ENCODE measurements at regions of chr5 and their contacts with region 1.

Region 1: DNA sequence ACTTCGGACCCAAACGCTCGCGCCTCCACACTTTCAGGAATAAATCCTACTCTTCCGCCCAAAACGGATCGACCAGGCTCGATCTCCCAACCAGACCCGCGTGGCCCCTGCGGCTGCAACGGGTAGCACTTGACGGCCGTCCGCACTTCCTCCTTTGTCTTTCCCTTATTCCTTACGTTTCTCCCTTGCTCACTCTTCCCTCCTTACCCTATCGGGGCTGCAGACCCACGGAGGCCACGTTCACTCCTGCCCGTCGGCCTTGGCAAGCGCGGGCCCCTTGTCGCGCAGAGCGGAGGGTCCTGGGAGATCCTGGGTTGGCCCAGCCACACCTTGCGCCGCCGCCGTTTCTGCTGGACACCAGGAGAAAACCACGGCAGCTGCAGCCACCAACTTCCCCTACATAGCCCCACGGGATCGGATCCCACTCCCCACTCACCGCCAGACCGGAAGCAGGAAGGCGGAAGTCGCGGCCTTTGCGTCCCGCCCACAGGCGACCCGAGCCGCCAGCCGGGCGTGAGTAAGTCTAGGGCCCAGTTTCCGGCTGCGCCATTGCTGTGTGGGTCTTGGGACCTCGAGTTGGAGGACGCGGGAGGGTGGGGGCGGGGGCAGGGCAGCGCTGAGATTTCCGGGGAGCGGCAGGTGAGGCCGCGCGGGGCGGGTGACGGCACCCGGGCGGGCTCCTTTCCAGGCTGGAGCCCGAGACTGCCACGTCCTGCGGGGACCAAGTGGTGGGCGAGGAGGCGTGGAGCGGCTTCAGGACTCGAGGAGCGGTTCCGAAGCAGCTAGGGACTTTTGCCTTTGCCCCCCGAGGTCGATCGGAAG is at the start of gene SMIM15:
- DNase-seq: peak; percentile 54
- ATAC-seq: peak; percentile 94
- H3K4me3 ChIP-seq: peak within 1 kb of the TSS; percentile 73
- H3K27ac ChIP-seq: peak within 1 kb of the TSS; percentile 98
- H3K4me1 ChIP-seq: no peaks in the 10 kb centered on the region; the same call in 1 of the 2 replicates
- H3K27me3 ChIP-seq: no peaks in the 10 kb centered on the region
- CTCF ChIP-seq: no peak
- EP300 ChIP-seq: no peak
- POLR2A ChIP-seq: peak; percentile 99
- RAD21 ChIP-seq: no peak
- polyA plus RNA-seq, gene SMIM15: 13.8 to 18.7 TPM

Region 2: DNA sequence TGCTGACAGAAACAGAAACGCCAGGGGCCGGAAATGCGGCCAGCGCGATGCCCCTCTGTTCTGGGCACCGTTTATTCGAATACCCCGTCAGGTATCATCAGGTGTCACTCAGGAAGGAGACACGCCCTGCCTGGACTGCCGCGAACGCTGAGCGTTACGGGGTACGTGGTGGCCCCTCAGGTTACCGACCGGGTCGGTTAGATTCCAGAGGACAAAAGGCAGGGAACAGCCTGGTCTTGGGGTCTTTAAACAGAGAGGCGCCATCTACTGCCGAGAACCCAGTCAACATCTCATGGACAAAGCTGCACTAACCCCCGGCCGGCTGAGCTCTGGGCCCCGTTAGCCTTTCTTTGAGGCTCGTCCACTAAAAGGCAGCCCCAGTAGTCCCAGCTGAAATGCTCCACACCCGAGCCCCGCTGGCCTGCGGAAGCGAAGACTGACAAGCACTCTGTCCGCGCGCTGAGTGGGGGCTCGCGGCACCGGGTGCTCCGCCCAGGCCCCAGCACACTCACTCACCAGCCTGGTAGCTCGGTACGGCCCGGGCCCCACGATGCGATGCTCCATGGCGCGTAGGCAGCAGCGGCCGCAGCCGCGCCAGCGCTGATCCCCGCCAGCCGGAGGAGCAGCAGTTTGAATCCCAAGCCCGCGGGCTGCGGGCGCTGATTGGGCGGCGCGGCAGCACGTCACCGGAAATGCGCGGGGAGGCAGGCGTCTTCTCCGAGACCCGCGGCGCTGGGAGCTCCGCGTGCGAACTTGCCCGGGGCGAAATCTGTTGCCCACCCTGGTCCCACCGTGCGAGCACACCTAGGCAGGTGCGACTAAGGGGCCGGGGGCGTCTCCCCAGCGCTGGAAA is 462.5 kb before region 1 on chr5 and contains the start of gene DEPDC1B:
- CTCF ChIA-PET with region 1: no interaction called
- POLR2A ChIA-PET with region 1: no interaction called
- RAD21 ChIA-PET with region 1: no interaction called
- SMC1A ChIA-PET with region 1: no interaction called
- in situ Hi-C with region 1: no loop called
- intact Hi-C with region 1: loop called (anchors 10 kb)
- DNase-seq: peak; percentile 50
- ATAC-seq: peak; percentile 95
- H3K4me3 ChIP-seq: peak within 1 kb of the TSS; percentile 94
- H3K27ac ChIP-seq: peak within 1 kb of the TSS; percentile 89
- H3K4me1 ChIP-seq: no peaks in the 10 kb centered on the region
- H3K27me3 ChIP-seq: no peaks in the 10 kb centered on the region
- CTCF ChIP-seq: peak; percentile 28 to 37 (median 33); a peak in 5 of 6 replicates
- EP300 ChIP-seq: no peak
- POLR2A ChIP-seq: peak; percentile 93
- RAD21 ChIP-seq: no peak
- polyA plus RNA-seq, gene DEPDC1B: 29.7 to 30.1 TPM

Region 3: GRCh38 chr5:61089351-61089750 is 72.9 kb before region 1 on chr5:
- CTCF ChIA-PET with region 1: no interaction called
- POLR2A ChIA-PET with region 1: no interaction called
- RAD21 ChIA-PET with region 1: no interaction called
- SMC1A ChIA-PET with region 1: no interaction called
- in situ Hi-C with region 1: no loop called
- intact Hi-C with region 1: no loop called
- DNase-seq: no peak
- ATAC-seq: no peak
- H3K4me3 ChIP-seq: no peak overlapping the region
- H3K27ac ChIP-seq: no peak overlapping the region
- H3K4me1 ChIP-seq: no peaks in the 10 kb centered on the region
- H3K27me3 ChIP-seq: no peaks in the 10 kb centered on the region
- CTCF ChIP-seq: no peak
- EP300 ChIP-seq: no peak
- POLR2A ChIP-seq: no peak
- RAD21 ChIP-seq: no peak

Region 4: DNA sequence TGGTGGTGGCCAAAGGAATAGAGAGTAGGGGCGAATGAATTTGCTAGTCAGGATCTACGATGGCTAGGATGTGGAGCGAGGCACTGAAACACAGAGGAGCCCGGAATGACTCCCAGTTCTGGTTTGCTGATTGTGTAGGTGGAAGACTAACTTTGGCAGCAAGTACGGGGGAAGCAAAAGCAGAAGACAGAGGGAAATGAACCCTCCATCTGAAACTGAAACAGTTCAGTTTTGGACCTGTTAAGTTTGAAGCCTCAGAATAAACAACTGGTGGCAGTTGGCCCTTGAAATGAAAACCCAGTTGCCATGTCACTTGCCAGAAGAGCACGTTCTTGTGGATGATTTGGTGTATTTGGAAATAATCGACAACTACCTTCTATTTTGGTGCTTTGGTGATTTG is 15.5 kb after region 1 on chr5:
- CTCF ChIA-PET with region 1: interaction called, 3 read pairs
- POLR2A ChIA-PET with region 1: interaction called, 11 read pairs
- RAD21 ChIA-PET with region 1: no interaction called
- SMC1A ChIA-PET with region 1: interaction called, 10 read pairs
- in situ Hi-C with region 1: no loop called
- intact Hi-C with region 1: no loop called
- DNase-seq: no peak
- ATAC-seq: peak; percentile 91
- H3K4me3 ChIP-seq: no peak overlapping the region
- H3K27ac ChIP-seq: no peak overlapping the region
- H3K4me1 ChIP-seq: peaks cover 10% of the 10 kb centered on the region
- H3K27me3 ChIP-seq: no peaks in the 10 kb centered on the region
- CTCF ChIP-seq: no peak
- EP300 ChIP-seq: no peak
- POLR2A ChIP-seq: no peak
- RAD21 ChIP-seq: no peak

Region 5: DNA sequence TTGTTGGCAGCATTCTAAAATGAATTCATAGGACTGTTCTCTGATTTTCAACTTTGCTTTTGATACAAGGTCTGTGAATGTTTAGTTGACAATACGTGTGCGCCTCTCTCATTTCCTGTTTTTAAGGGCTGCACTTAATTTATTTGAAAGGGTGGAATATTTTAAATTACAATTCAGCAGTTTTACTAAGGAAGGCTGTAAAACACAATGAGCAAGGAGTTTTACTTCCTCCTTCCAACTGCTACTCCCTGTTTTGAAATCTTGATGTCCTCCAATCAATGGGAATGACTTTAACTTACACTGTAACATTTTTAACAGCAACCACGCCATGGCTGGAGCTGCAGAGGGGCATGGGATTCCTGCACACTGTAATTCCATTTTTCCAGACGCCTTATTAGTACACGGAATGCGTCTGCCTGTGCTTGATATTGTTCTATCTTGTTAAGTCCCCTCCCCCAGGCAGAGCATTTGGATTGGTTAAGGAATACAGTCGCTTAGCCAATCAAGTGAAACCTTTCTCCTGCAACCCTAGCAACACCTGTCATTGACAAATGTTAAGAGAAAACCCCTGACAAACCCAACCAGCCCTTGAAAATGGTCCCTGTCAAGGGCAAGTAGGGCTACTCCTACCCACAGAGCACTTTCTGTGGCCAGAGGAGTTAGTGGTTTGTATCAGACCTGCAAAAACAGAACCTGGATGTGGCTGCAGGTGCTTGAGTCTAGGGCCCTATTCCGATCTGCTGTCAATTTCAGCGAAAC is 157.3 kb after region 1 on chr5:
- CTCF ChIA-PET with region 1: interaction called, 4 read pairs
- POLR2A ChIA-PET with region 1: no interaction called
- RAD21 ChIA-PET with region 1: interaction called, 3 read pairs
- SMC1A ChIA-PET with region 1: interaction called, 5 read pairs
- in situ Hi-C with region 1: loop called (anchors 10 kb)
- intact Hi-C with region 1: no loop called
- DNase-seq: peak; percentile 88
- ATAC-seq: peak; percentile 99
- H3K4me3 ChIP-seq: peak overlapping the region; percentile 42; the same call in 1 of the 2 replicates
- H3K27ac ChIP-seq: peak overlapping the region; percentile 61
- H3K4me1 ChIP-seq: peaks cover 26% of the 10 kb centered on the region
- H3K27me3 ChIP-seq: 0 out of 4 replicates have a peak, but pooled peaks cover 0 to 5% of the 10 kb centered on the region in 2 experiments
- CTCF ChIP-seq: no peak
- EP300 ChIP-seq: peak; percentile 80 to 83; a peak in 3 of 4 replicates
- POLR2A ChIP-seq: no peak
- RAD21 ChIP-seq: peak; percentile 31; the same call in 1 of the 2 replicates

Region 6: DNA sequence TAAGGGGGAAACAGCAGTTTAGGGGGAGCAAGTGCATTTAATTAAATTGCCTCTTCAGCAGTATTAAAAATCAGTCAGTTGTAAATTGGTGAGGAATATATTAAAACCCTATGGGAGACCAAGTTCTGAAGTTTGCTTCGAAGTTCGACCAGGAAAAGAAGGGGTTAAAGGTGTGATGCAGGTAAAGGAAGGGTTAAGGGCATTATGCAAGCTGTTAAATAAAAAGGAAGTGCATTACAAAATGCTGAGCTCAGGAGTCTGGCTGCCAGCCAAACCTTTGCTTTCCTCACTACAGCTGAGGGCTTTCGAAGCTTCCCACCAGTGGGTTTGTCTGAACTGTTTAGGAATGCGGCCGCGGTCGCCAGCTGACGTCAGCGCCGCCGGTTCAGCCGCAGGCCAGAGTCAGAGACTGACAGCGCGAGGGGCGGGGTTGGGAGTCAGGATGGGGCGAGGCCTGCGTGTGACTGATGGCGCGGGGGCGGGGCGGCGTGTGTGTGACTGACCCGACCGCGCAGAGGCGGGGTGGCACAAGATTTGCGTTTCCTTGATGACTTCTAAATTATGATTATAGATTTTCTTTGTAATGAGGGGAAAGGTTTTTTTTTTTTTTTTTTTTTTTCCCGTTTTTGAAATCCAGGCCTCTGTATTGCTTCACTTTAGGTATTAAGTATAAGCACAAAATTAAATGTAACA is 246.4 kb after region 1 on chr5:
- CTCF ChIA-PET with region 1: interaction called, 4 read pairs
- POLR2A ChIA-PET with region 1: interaction called, 3 read pairs
- RAD21 ChIA-PET with region 1: interaction called, 3 read pairs
- SMC1A ChIA-PET with region 1: no interaction called
- in situ Hi-C with region 1: no loop called
- intact Hi-C with region 1: loop called (anchors 5 kb)
- DNase-seq: peak; percentile 61
- ATAC-seq: peak; percentile 99
- H3K4me3 ChIP-seq: peak overlapping the region; percentile 45; the same call in 1 of the 2 replicates
- H3K27ac ChIP-seq: no peak overlapping the region
- H3K4me1 ChIP-seq: no peaks in the 10 kb centered on the region; the same call in 1 of the 2 replicates
- H3K27me3 ChIP-seq: no peaks in the 10 kb centered on the region
- CTCF ChIP-seq: no peak
- EP300 ChIP-seq: peak; percentile 78 to 82; a peak in 3 of 4 replicates
- POLR2A ChIP-seq: no peak
- RAD21 ChIP-seq: no peak

Region 7: DNA sequence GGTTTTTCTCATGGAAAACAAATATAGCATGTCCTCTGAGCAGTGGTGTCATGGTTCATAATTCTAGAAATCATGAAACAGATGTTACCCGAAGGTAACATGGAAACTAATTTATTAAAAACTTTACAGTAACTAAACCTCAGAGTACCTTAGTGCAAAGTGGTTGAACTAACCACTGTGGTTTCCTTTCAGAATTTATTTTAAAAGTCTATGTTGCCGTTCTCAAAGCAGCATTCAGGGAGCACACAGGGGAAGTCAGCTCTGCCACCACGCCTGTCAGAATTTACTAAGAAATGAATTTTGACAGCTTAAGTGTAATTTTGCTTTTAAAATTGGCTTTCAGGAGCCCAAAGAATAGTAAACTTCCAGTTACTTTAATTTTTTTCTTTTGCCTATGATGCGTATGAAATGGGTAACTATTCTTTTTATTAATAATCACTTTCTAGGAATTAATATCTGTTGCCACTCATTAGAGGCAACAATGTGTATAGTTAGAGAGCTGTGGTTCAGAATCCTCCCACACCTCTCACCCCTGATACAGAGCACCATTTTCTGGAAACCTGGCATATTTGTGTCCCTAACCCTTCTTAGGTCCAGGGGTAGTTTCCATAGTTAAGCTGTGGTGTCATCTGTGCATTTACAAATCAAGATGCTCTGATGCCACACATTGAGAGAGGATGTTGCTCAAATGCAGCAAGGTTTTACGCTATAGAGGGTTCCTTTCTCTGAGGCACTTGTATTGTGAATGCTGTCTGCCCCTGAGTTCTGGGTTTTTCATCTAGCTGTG is 372.5 kb after region 1 on chr5:
- CTCF ChIA-PET with region 1: no interaction called
- POLR2A ChIA-PET with region 1: no interaction called
- RAD21 ChIA-PET with region 1: no interaction called
- SMC1A ChIA-PET with region 1: no interaction called
- in situ Hi-C with region 1: no loop called
- intact Hi-C with region 1: loop called (anchors 10 kb)
- DNase-seq: peak; percentile 64
- ATAC-seq: peak; percentile 91
- H3K4me3 ChIP-seq: no peak overlapping the region
- H3K27ac ChIP-seq: no peak overlapping the region
- H3K4me1 ChIP-seq: peaks cover 9% of the 10 kb centered on the region
- H3K27me3 ChIP-seq: no peaks in the 10 kb centered on the region
- CTCF ChIP-seq: no peak
- EP300 ChIP-seq: peak in 1 of 2 experiments; percentile 37; a peak in 2 of 4 replicates
- POLR2A ChIP-seq: no peak
- RAD21 ChIP-seq: no peak

Region 8: DNA sequence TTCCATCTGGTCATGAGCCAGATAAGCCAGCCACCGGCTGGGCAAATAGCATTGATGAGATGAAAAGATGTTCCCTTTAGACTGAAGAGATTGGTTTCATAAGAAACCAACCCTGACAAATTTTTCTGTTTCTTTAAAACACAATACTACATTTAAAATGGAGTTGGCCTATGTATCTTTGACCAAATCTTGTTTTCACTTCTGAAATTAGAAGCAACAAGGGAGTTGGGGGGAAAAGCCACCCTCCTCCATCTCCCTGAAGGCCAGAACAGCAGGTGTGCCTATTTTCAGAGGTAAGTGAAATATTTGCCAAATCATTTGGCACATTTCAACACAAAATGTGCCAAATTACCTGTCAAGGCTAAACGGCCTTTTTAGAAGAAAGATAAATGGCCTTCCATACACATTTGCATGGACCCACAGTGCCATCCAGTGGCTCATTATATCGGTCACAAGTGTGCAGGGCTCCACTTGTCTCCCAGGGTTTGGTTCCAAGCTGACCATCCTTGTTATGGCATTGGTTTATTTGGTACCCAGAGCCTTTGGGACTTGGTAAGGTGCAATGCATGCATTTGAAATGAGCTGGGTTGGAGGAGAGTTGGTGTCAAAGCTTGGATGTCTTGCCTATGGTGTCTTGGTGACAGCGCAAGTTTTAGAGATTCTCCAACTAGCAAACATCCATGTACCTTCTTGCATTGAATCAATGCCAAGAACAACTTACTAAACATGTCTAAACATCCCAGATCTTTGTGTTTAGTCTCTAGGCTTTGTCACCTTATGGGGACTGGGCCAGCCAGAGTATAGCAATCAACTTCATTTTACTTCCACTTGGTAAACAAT is 771.8 kb after region 1 on chr5:
- CTCF ChIA-PET with region 1: no interaction called
- POLR2A ChIA-PET with region 1: no interaction called
- RAD21 ChIA-PET with region 1: no interaction called
- SMC1A ChIA-PET with region 1: no interaction called
- in situ Hi-C with region 1: no loop called
- intact Hi-C with region 1: loop called (anchors 10 kb)
- DNase-seq: peak; percentile 7
- ATAC-seq: peak; percentile 83
- H3K4me3 ChIP-seq: no peak overlapping the region
- H3K27ac ChIP-seq: no peak overlapping the region
- H3K4me1 ChIP-seq: no peaks in the 10 kb centered on the region
- H3K27me3 ChIP-seq: no peaks in the 10 kb centered on the region
- CTCF ChIP-seq: peak; percentile 43 to 54 (median 52); a peak in 4 of 6 replicates
- EP300 ChIP-seq: no peak
- POLR2A ChIP-seq: no peak
- RAD21 ChIP-seq: peak; percentile 70

Measured in GM12878 (cell line).